ENCODE measurements at regions of chr7 and their contacts with region 1.

Region 1: DNA sequence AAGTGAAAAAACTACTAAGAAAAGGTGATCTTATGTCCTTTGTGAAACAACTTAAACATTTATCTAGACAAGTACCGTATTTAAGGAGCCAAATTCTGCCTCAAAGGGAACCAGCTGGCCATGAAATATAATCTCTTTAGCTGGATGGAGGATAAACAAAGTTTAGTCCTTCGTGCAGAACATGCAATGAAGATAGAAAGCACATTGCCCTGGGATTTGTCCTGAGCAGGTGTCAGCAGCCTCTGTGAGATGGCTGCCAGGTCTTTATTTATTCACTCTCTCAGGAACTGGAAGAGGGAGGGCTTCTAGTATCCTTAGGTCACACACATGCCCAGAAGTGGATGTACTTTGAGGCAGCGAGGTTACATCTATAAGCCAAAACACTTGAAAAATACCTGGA is 57.4 kb upstream of the CASD1 start:
- DNase-seq: no peak
- H3K4me3 ChIP-seq: no peak overlapping the region
- H3K27ac ChIP-seq: no peak overlapping the region
- H3K4me1 ChIP-seq: no peaks in the 10 kb centered on the region
- H3K27me3 ChIP-seq: no peaks in the 10 kb centered on the region

Region 2: DNA sequence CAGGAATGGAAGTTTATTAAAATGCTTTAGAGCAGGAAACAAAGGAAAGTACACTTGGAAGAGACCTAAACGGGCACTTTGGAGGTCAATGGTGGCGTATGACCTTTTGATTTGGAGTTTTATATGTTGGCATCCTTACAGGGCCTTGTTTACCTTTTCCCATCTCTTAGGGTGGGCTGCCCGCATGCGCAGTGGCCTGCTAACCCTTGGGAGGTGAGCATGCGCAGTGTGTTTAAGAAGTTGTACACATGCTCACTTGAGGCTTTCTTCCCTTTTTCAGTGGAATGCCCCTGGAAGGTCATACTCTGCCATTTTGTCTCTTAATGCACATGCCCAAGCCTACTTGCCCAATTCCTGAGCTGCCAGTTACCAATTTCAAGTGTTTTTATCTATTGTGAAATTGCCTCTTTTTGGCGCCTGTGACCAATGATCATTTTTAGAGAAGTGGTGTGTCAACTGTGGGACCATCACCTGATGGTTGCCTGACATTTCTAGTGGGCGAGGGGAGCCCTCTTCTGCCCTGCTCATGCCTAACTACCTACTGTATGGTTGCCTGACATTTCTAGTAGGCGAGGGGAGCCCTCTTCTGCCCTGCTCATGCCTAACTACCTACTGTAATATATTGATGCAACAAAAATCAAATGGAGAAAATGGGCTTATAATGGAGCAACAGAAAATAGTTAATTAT is 593.1 kb after region 1 on chr7:
- in situ Hi-C with region 1: loop called (anchors 25 kb)
- DNase-seq: peak; percentile 35
- H3K4me3 ChIP-seq: no peak overlapping the region
- H3K27ac ChIP-seq: no peak overlapping the region
- H3K4me1 ChIP-seq: no peaks in the 10 kb centered on the region
- H3K27me3 ChIP-seq: no peaks in the 10 kb centered on the region

Region 3: GRCh38 chr7:95246831-95247370 is 794.7 kb after region 1 on chr7:
- in situ Hi-C with region 1: loop called (anchors 25 kb)
- DNase-seq: peak; percentile 81
- H3K4me3 ChIP-seq: peak overlapping the region; percentile 56
- H3K27ac ChIP-seq: no peak overlapping the region
- H3K4me1 ChIP-seq: 0 out of 2 replicates have a peak, but pooled peaks cover 3% of the 10 kb centered on the region
- H3K27me3 ChIP-seq: peaks cover 11% of the 10 kb centered on the region; the same call in 1 of the 2 replicates

Region 4: DNA sequence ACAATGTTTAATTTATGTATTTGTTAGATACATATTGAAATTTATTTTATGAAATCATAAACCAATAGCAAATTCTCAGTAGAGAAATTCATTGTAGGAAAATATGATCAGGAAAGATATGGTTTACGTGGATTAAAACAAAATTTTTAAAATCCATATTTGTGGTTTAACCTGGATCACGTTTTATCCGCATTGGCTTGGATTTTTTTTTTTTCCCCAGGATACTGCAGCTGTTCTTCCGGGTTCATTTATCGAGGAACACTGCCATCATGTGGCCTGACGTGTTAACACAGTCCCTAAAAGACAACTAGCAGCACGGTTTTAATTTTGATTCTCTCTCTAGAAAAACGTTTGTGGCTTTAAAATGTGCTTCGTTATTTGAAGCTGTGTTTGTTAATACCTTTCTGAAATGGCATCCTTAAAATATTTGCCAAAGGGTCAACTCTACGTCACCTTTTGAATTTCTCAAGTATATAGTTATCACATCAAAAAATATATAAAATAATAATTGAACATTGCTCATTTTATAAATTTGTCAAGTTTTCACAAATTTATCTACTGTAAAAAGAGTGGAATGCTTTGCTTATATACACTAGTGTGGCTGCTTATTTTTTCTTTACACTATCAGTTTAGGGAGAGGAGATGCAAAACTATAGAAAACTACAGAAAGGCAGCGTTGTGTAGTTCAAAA is 1024.8 kb after region 1 on chr7:
- in situ Hi-C with region 1: loop called (anchors 25 kb)
- DNase-seq: peak; percentile 84
- H3K4me3 ChIP-seq: no peak overlapping the region
- H3K27ac ChIP-seq: no peak overlapping the region
- H3K4me1 ChIP-seq: no peaks in the 10 kb centered on the region
- H3K27me3 ChIP-seq: no peaks in the 10 kb centered on the region

Measured in GM23248 (cell line).